A549 (cell line): ENCODE measurements at regions of chr19 and their contacts with region 1.

Region 1: GRCh38 chr19:17766543-17767131 is 15.4 kb downstream of the FCHO1 start:
- DNase-seq: peak; percentile 64 to 97
- ATAC-seq: peak; percentile 83 to 89
- H3K4me3 ChIP-seq: peak overlapping the region; percentile 24; the same call in 2 of the 3 replicates
- H3K27ac ChIP-seq: peak overlapping the region; percentile 84 to 94
- H3K4me1 ChIP-seq: peaks cover 28% of the 10 kb centered on the region
- CTCF ChIP-seq: peak; percentile 83
- EP300 ChIP-seq: peak in 1 of 2 experiments; percentile 66; a peak in 1 of 5 replicates
- POLR2A ChIP-seq: no peak
- RAD21 ChIP-seq: peak; percentile 91 to 94

Region 2: GRCh38 chr19:17496337-17496997 is 270.2 kb before region 1 on chr19:
- CTCF ChIA-PET with region 1: interaction called, 14 read pairs
- POLR2A ChIA-PET with region 1: interaction called, 3 read pairs
- DNase-seq: peak; percentile 66 to 84
- ATAC-seq: peak; percentile 92 to 97
- H3K4me3 ChIP-seq: no peak overlapping the region
- H3K27ac ChIP-seq: no peak overlapping the region
- H3K4me1 ChIP-seq: peaks cover 7% of the 10 kb centered on the region; the same call in 1 of the 3 replicates
- CTCF ChIP-seq: peak; percentile 80
- EP300 ChIP-seq: no peak
- POLR2A ChIP-seq: no peak
- RAD21 ChIP-seq: peak; percentile 43 to 47

Region 3: GRCh38 chr19:17703824-17704463 is 62.7 kb before region 1 on chr19:
- CTCF ChIA-PET with region 1: interaction called, 17 read pairs
- POLR2A ChIA-PET with region 1: no interaction called
- DNase-seq: peak in 1 of 2 experiments; percentile 40
- ATAC-seq: peak in 1 of 2 experiments; percentile 69; a peak in 3 of 6 replicates
- H3K4me3 ChIP-seq: no peak overlapping the region
- H3K27ac ChIP-seq: no peak overlapping the region
- H3K4me1 ChIP-seq: no peaks in the 10 kb centered on the region
- CTCF ChIP-seq: peak; percentile 42
- EP300 ChIP-seq: no peak
- POLR2A ChIP-seq: no peak
- RAD21 ChIP-seq: peak; percentile 23 to 44; a peak in 3 of 5 replicates

Region 4: GRCh38 chr19:17716309-17716929 is 50.2 kb before region 1 on chr19:
- CTCF ChIA-PET with region 1: interaction called, 10 read pairs
- POLR2A ChIA-PET with region 1: no interaction called
- DNase-seq: no peak
- ATAC-seq: 0 out of 6 replicates have a peak, but pooled peaks of 1 of the 2 experiments have one; percentile 14
- H3K4me3 ChIP-seq: no peak overlapping the region
- H3K27ac ChIP-seq: no peak overlapping the region
- H3K4me1 ChIP-seq: peaks cover 14% of the 10 kb centered on the region
- CTCF ChIP-seq: no peak; the same call in 2 of the 3 replicates
- EP300 ChIP-seq: no peak
- POLR2A ChIP-seq: no peak
- RAD21 ChIP-seq: no peak

Region 5: GRCh38 chr19:17751103-17751911 is 15.3 kb before region 1 on chr19 and contains the start of gene FCHO1:
- CTCF ChIA-PET with region 1: interaction called, 29 read pairs
- POLR2A ChIA-PET with region 1: no interaction called
- DNase-seq: no peak
- ATAC-seq: no peak
- H3K4me3 ChIP-seq: no peak within 1 kb of the TSS
- H3K27ac ChIP-seq: peak within 1 kb of the TSS in 1 of 2 experiments; percentile 56; a peak in 2 of 6 replicates
- H3K4me1 ChIP-seq: peaks cover 25% of the 10 kb centered on the region
- CTCF ChIP-seq: no peak
- EP300 ChIP-seq: no peak
- POLR2A ChIP-seq: no peak
- RAD21 ChIP-seq: no peak
- polyA plus RNA-seq, gene FCHO1: 1.7 and 2.2 TPM in 2 replicates